ENCODE measurements at regions of chr6 and their contacts with region 1.

Region 1: DNA sequence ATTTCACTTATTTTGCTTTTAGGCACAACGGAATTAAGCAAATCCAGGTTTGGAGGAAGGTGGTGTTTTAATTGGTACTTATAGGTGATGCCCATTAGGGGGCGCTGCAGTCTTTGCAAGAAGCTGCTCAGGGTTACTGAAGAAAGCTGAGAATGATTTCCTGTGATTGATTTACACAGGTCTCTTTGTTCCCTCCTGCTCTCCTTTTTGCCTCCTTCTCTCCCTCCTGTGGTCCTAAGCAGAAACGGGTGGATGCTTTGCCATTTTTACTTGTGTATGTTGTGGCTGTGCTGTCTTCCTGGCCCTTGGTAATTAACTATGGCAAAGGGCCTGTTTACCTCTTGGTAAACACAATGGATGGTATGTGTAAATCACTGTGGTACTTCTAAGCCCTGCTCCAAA is 97.8 kb downstream of the ANKS1A start:
- DNase-seq: no peak
- H3K4me3 ChIP-seq: no peak overlapping the region
- CTCF ChIP-seq: peak; percentile 48

Region 2: GRCh38 chr6:34705241-34705640 is 281.6 kb before region 1 on chr6:
- CTCF ChIA-PET with region 1: no interaction called
- POLR2A ChIA-PET with region 1: no interaction called
- DNase-seq: no peak
- H3K4me3 ChIP-seq: no peak overlapping the region
- CTCF ChIP-seq: no peak

Region 3: GRCh38 chr6:35011096-35012041 is 24.5 kb after region 1 on chr6:
- CTCF ChIA-PET with region 1: interaction called, 49 read pairs
- POLR2A ChIA-PET with region 1: no interaction called
- DNase-seq: no peak
- H3K4me3 ChIP-seq: no peak overlapping the region
- CTCF ChIP-seq: no peak

Region 4: DNA sequence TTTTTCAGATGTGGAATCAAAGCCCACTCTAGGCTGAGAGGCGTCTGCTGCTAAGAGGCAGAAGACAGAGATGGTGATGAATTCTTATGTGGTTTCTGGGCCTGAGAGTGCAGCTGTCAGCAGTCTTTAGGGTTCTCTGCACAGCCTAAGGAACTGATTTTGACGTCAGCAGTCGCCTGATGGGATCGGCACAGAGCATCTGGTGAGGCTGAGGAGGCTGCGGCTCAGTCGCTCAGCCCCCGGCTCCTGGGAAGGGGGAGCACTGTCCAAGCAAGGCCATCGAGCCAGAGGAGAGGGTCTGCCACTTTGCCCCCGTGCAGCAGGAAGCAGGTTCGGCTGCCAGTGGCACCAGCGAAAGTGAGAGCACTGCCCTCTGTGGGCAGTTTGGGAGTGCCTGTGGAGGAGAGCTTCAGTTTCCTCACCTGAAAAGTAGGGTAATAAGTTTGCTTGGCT is 61.8 kb after region 1 on chr6:
- CTCF ChIA-PET with region 1: interaction called, 13 read pairs
- POLR2A ChIA-PET with region 1: no interaction called
- DNase-seq: peak; percentile 40
- H3K4me3 ChIP-seq: no peak overlapping the region
- CTCF ChIP-seq: peak; percentile 50

Region 5: DNA sequence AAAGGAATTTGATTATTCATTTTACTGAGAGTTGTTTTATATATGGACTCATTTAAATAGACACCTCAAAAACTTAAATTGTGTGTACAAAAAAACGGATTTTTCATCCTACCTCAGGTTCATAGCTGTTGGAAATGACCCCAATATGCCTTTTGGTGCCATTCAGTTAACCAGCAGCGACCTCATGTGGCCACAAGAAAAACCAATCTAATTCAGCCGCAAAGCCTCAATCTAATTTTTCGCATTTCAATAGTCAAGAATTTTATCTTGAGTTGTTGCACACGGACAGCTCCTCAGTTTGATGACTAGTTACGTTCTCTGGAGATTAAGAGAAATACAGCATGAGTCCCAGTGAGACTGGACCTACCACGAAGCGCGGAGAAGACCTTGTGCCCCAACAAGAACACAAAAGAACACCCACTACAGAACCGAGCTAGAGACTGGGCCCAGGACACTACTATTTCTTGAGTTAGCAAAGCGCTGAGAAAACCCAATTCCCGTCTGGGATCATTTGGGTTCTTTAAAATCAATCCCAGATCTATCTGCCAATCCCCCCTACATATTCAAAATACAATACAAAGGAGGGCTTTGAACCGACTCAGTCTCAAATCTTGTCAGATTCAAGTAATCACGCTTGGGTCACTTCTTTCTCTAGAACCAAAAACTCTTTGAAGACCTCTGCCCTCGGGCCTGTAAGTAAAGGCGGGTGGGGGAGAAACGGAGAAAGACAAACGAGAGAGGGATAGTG is 153.2 kb after region 1 on chr6:
- CTCF ChIA-PET with region 1: interaction called, 309 read pairs
- POLR2A ChIA-PET with region 1: no interaction called
- DNase-seq: peak; percentile 41
- H3K4me3 ChIP-seq: no peak overlapping the region
- CTCF ChIP-seq: peak; percentile 58

Region 6: DNA sequence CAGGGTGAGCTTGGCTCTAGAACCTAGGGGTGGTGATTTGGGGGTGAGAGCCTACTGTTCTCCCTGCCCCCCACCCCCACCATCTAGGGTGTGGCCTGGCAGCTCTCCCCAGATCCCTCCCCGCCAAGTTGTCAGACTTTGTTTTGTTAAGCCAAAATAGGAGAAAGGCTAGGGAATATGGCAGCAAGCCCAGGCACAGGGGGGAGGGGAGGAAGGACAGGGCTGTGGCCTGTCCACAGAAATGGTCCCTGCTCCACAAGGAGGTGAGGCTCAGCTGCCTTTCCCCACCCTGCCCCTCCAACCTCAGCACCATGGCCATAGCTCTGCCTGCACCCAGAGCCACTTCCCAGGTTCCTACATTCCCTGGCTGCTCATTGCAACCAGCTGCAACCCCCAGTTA is 244.1 kb after region 1 on chr6:
- CTCF ChIA-PET with region 1: interaction called, 25 read pairs
- POLR2A ChIA-PET with region 1: no interaction called
- DNase-seq: no peak
- H3K4me3 ChIP-seq: no peak overlapping the region
- CTCF ChIP-seq: no peak

Region 7: DNA sequence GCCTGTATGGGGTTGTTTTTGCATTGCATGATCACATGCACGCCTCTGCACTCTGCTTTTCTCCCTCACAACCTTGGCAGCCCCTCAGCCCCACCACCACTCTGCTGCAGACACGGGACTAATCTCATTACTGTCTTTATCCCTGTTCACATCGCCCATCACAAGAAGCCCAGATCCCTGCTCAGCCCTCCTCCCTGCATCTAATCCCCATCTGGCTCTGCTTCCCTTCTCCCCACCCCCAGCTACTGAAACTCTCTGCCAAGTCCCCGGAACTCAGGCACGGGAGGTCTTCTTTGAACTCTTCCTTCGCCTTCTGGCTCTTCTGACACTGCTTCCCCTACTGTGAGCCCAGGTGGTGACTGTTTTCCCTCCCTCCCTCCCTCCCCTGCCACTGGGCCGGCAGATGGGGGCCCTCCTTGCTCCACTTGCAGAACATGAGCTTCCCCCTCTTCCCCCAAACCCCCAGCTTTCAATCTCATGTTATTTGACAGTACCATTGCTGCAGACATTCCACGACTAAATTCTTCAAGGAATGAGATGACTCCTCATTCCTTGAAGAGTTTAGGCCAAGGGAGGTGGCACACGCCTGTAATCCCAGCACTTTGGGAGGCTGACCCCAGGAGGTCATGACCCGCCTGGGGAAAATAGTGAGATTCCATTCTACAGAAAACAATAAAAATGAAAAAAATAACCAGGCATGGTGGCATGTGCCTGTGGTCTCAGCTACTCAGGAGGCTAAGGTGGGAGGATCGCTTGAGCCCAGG is 547.7 kb after region 1 on chr6:
- CTCF ChIA-PET with region 1: no interaction called
- POLR2A ChIA-PET with region 1: no interaction called
- DNase-seq: no peak
- H3K4me3 ChIP-seq: no peak overlapping the region
- CTCF ChIP-seq: no peak

Measured in AG04449 (cell line).